ENCODE measurements at regions of chr9 and their contacts with region 1.

Region 1: GRCh38 chr9:110152704-110153374 is 55.1 kb downstream of the C9orf152 start:
- DNase-seq: peak in 4 of 5 donors; percentile 20 to 34 (median 30)
- H3K4me3 ChIP-seq: no peak overlapping the region
- H3K4me3 Mint-ChIP-seq: no peak overlapping the region
- H3K27ac ChIP-seq: no peak overlapping the region
- H3K27ac Mint-ChIP-seq: peak overlapping the region in 2 of 7 donors; percentile 49 to 72
- H3K4me1 ChIP-seq: peaks cover 54% of the 10 kb centered on the region
- H3K4me1 Mint-ChIP-seq: peaks cover 39 to 81% (median 62%) of the 10 kb centered on the region in 4 donors
- H3K27me3 ChIP-seq: no peaks in the 10 kb centered on the region
- H3K27me3 Mint-ChIP-seq: no peaks in the 10 kb centered on the region

Region 2: GRCh38 chr9:109574068-109574882 is 578.6 kb before region 1 on chr9:
- CTCF ChIA-PET with region 1: interaction called, 6 read pairs
- POLR2A ChIA-PET with region 1: no interaction called
- intact Hi-C with region 1: loop called (anchors 10 kb)
- DNase-seq: peak in 4 of 5 donors; percentile 0 to 4 (median 2)
- H3K4me3 ChIP-seq: no peak overlapping the region
- H3K4me3 Mint-ChIP-seq: no peak overlapping the region
- H3K27ac ChIP-seq: no peak overlapping the region
- H3K27ac Mint-ChIP-seq: no peak overlapping the region
- H3K4me1 ChIP-seq: no peaks in the 10 kb centered on the region
- H3K4me1 Mint-ChIP-seq: no peaks in the 10 kb centered on the region
- H3K27me3 ChIP-seq: no peaks in the 10 kb centered on the region
- H3K27me3 Mint-ChIP-seq: peaks cover 1 to 2% of the 10 kb centered on the region in 2 donors

Region 3: DNA sequence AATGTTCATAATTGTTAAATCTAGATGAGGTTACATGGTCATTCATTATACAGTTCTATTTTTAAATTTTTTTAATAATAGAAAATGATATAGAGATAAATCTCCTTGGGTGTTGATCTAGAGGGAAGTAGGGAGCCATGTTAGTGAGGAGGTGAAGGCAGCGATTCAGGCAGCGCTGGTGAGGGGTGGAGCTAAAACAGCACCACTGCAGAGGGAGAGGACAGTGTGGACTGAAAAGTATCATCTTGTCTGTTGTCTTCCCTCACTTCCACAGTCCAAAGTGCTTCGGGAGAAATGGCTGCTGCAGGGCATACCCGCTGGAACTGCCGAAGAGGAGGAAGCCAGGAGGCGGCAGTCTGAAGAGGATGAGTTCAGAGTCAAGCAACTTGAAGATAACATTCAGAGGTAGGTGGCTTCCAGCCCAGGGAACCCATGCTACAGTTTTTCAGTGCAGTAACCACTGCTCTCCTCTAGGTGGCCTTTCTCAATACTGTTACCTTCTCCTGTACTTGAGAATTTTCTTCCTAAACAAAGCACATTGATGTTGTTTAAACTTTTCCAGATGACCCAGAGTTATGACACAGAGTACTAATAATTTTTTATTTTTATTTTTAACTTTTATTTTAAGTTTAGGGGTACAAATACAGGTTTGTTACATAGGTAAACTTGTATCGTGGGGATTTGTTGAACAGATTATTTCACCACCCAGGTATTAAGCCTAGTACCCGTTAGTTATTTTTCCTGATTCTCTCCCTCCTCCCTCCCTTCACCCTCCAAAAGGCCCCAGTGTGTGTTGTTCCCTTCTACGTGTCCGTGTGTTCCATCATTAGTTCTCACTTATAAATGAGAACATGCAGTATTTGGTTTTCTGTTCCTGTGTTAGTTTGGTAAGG is 272.3 kb before region 1 on chr9:
- CTCF ChIA-PET with region 1: interaction called, 6 read pairs
- POLR2A ChIA-PET with region 1: no interaction called
- intact Hi-C with region 1: loop called (anchors 5 kb)
- DNase-seq: peak; percentile 14 to 41 (median 23)
- H3K4me3 ChIP-seq: no peak overlapping the region
- H3K4me3 Mint-ChIP-seq: peak overlapping the region in 4 of 8 donors; percentile 21 to 59 (median 43)
- H3K27ac ChIP-seq: no peak overlapping the region
- H3K27ac Mint-ChIP-seq: no peak overlapping the region
- H3K4me1 ChIP-seq: no peaks in the 10 kb centered on the region
- H3K4me1 Mint-ChIP-seq: peaks cover 0 to 5% (median 2%) of the 10 kb centered on the region in 4 donors
- H3K27me3 ChIP-seq: no peaks in the 10 kb centered on the region
- H3K27me3 Mint-ChIP-seq: peaks cover 1 to 4% of the 10 kb centered on the region in 2 donors

Region 4: GRCh38 chr9:110058304-110058953 is 94.4 kb before region 1 on chr9:
- CTCF ChIA-PET with region 1: interaction called, 23 read pairs
- POLR2A ChIA-PET with region 1: no interaction called
- intact Hi-C with region 1: loop called (anchors 2 kb)
- DNase-seq: peak in 4 of 5 donors; percentile 40 to 48 (median 47)
- H3K4me3 ChIP-seq: no peak overlapping the region
- H3K4me3 Mint-ChIP-seq: no peak overlapping the region
- H3K27ac ChIP-seq: no peak overlapping the region
- H3K27ac Mint-ChIP-seq: no peak overlapping the region
- H3K4me1 ChIP-seq: no peaks in the 10 kb centered on the region
- H3K4me1 Mint-ChIP-seq: peaks cover 4 to 15% (median 7%) of the 10 kb centered on the region in 4 donors
- H3K27me3 ChIP-seq: no peaks in the 10 kb centered on the region
- H3K27me3 Mint-ChIP-seq: no peaks in the 10 kb centered on the region

Region 5: GRCh38 chr9:110183208-110184145 is 30.6 kb after region 1 on chr9:
- CTCF ChIA-PET with region 1: interaction called, 17 read pairs
- POLR2A ChIA-PET with region 1: no interaction called
- intact Hi-C with region 1: no loop called
- DNase-seq: peak in 4 of 5 donors; percentile 25 to 43 (median 40)
- H3K4me3 ChIP-seq: no peak overlapping the region
- H3K4me3 Mint-ChIP-seq: no peak overlapping the region
- H3K27ac ChIP-seq: no peak overlapping the region
- H3K27ac Mint-ChIP-seq: peak overlapping the region in 1 of 7 donors; percentile 32
- H3K4me1 ChIP-seq: no peaks in the 10 kb centered on the region
- H3K4me1 Mint-ChIP-seq: peaks cover 0 to 7% (median 0%) of the 10 kb centered on the region in 4 donors
- H3K27me3 ChIP-seq: no peaks in the 10 kb centered on the region
- H3K27me3 Mint-ChIP-seq: peaks cover 0 to 3% of the 10 kb centered on the region in 2 donors

Region 6: DNA sequence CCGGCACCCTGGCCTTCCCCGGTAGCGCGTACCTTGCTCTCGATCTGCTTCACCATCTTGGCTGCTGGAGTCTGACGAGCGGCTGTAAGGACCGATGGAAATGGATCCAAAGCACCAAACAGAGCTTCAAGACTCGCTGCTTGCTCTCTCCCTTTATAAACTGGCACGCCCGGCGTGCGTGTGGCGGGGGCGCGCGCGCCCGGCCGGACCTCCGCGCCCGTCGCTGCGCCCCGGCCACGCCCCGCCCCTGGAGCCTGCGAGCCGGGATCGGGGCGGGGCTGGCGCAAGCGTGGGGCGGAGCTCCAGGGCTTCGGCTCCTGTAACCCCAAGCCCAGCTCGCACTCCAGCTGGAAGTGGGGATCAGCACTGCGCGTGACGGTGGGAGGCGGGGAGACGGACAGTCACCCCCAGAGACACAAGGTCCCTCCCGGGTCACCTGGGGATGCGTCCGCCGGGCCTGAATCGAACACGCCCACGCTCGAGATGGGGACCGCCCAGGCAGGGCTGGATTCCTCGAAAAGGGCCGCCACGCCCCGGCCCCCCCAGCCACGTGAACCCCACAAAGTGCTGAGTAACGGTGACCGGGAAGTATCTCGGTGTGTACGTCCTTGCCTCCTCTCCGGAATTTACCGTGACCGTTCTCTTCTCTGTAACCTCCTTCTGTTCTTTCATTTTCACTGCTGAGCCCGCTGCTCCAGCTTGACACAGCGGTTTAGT is 103.7 kb after region 1 on chr9 and contains the start of gene TXN:
- CTCF ChIA-PET with region 1: no interaction called
- POLR2A ChIA-PET with region 1: interaction called, 4 read pairs
- intact Hi-C with region 1: loop called (anchors 10 kb)
- DNase-seq: peak; percentile 76 to 81 (median 81)
- H3K4me3 ChIP-seq: peak within 1 kb of the TSS; percentile 64 to 90
- H3K4me3 Mint-ChIP-seq: peak within 1 kb of the TSS; percentile 94 to 99 (median 97)
- H3K27ac ChIP-seq: peak within 1 kb of the TSS; percentile 69
- H3K27ac Mint-ChIP-seq: peak within 1 kb of the TSS; percentile 90 to 99 (median 96)
- H3K4me1 ChIP-seq: peaks cover 40% of the 10 kb centered on the region
- H3K4me1 Mint-ChIP-seq: peaks cover 26 to 47% (median 37%) of the 10 kb centered on the region in 4 donors
- H3K27me3 ChIP-seq: no peaks in the 10 kb centered on the region
- H3K27me3 Mint-ChIP-seq: no peaks in the 10 kb centered on the region
- total RNA-seq, gene TXN: 45.6 to 47.9 TPM

Measured in CD4-positive, alpha-beta memory T cell (primary cell).